ENCODE measurements at regions of chr13 and their contacts with region 1.

Region 1: GRCh38 chr13:97359181-97360057 is 74.5 kb upstream of the RAP2A start:
- DNase-seq: no peak
- ATAC-seq: peak; percentile 91

Region 2: DNA sequence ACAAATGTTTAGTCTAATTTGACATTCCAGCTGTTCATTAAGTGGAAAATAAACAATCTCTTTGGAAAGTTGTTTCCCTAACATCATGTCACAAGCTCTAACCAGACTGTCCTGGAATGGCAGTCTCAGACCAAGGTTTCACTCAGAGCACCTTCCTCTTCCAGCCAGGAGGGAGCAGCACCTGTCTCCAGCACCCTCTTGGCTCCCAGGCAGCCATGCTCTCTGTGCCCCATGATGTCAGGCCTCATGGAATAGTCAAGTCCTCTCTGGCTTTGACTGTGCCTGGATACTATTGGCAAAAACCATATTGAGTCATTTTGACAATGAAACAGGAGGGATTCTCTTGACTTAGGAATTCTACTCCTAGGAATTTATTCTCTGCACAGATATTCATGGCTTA is 536.5 kb before region 1 on chr13:
- intact Hi-C with region 1: no loop called
- DNase-seq: no peak
- ATAC-seq: no peak

Region 3: DNA sequence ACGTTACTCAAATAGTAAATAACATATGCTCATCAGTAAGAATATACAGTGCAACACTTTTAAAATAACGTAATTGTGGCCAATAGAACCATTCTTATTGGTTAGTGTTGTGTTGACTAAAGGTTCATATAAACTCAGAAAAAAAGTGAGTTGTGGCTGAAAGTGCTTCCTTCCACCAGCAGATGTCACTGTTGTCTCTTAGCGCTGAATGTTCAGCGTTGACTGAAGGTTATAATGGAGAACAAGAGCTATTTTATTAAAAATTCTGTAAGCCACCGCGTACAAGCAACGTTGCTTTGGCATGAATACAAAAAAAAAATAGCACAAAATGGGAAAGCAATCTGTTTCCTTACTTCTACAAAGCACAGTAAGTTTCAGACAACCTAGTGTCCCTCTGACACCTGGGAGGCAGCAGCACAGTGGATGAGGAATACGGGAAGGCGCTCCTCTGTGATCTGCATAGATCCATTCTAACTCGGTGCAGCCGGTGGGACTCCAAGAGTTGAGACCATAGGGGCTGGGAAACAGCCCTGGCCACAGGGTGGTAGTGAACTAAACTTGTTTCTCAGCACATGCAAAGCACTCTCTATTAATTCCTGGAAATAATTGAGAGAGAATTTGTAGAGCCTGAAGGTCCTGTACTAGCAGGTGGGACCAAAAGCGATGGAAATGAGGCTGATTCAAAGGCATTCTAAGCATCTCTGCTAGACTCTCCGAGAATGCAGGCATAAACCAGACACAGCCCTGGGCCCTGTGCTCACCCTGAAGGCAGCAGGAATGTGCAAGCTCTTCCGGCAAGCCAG is 341.2 kb before region 1 on chr13:
- intact Hi-C with region 1: loop called (anchors 5 kb)
- DNase-seq: no peak
- ATAC-seq: no peak

Region 4: GRCh38 chr13:97109841-97110492 is 249.5 kb before region 1 on chr13:
- intact Hi-C with region 1: loop called (anchors 2 kb)
- DNase-seq: peak; percentile 95
- ATAC-seq: peak; percentile 98

Region 5: DNA sequence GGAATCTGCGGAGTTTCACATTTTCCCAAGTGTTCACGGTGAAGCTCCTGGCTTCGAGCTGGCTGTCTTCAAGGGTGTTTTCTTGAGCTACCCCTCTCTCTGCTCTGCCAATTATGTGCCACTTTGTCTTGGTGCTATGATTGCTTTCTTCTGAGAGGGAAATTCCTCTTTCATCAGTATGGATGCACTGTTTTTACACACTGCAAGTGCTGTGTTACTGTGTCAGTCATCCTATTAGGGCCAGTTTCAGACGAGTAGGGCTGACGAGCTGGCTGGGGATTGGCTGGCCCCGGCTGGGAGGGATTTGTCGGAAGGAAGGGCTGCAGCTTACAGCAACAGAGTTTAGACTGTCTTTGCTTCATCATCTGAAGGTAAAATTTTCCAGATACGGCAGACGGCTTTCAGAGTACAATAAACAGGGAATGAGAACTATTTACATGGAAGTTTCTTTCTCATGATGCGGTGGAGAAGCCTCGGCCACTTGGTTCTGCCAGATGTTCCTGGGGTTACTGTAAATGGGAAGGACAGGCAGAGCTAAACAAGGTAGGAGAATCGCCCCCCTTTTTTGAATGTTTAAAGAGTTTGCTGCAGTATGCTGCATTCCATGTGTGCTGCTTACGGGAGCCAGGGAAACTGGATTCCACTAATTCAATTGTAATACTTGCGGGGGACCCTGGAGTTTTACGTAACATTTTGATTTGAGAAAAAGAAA is 137.3 kb before region 1 on chr13 and contains the start of gene MBNL2:
- intact Hi-C with region 1: loop called (anchors 1 kb)
- DNase-seq: peak; percentile 92
- ATAC-seq: peak; percentile 97
- total RNA-seq, gene MBNL2: 69.1 TPM

Region 6: GRCh38 chr13:97284558-97284957 is 74.9 kb before region 1 on chr13:
- intact Hi-C with region 1: no loop called
- DNase-seq: no peak
- ATAC-seq: no peak

Region 7: DNA sequence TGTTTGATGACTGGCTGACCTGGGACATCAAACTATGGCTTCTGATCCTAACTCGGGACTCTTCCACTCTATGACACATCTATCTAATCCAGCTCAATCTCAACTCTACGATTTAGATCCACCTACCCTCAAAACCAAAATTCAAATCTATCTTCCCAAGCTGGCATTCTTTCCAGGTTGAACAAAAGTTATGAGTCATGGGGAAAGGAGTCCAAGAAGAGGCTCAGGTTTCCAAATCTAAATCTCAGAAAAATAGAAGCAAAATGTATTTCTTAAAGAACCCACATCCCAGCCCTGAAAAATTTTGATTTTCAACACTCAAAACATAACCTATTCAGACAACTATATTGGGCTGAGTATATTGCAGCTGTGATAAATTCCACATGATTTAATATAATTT is 450.2 kb after region 1 on chr13:
- intact Hi-C with region 1: loop called (anchors 10 kb)
- DNase-seq: no peak
- ATAC-seq: no peak

Measured in Right ventricle myocardium inferior (tissue), 1 donor.